PC-9 (cell line): ENCODE measurements at regions of chr12 and their contacts with region 1.

Region 1: DNA sequence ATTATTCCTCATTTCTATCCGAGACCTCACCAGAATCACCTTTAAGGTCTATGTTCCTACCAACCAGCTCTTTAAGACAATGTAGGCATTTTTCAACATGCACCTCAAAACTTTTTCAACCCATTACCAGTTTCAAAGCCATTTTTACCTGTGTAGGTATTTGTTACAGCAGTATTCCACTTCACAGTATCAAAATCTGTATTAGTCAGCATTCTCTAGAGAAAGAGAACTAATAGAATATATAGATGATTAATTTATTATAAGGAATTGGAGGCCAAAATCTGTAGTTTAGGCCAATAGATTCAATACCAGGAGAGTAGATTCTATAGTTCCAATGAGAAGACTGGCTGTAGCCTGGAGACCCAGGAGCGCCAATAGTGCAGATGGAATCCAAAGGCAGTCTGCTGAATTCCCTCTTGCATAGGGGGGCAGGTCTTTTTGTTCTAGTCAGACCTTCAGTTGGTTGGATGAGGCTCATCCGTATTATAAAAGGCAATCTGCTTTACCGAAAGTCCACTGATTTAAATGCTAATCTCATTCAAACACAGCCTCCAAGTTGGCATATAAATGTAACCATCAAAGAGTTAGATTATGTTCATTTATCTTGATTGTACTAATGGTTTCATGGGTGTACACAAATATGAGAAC is 151.6 kb upstream of the SYT1 start:
- DNase-seq: no peak
- H3K4me3 ChIP-seq: no peak overlapping the region
- H3K27ac ChIP-seq: no peak overlapping the region
- H3K4me1 ChIP-seq: no peaks in the 10 kb centered on the region
- H3K27me3 ChIP-seq: no peaks in the 10 kb centered on the region
- CTCF ChIP-seq: no peak

Region 2: GRCh38 chr12:78628491-78629100 is 84.4 kb before region 1 on chr12:
- CTCF ChIA-PET with region 1: interaction called, 15 read pairs
- POLR2A ChIA-PET with region 1: no interaction called
- intact Hi-C with region 1: no loop called
- DNase-seq: no peak
- H3K4me3 ChIP-seq: no peak overlapping the region
- H3K27ac ChIP-seq: no peak overlapping the region
- H3K4me1 ChIP-seq: no peaks in the 10 kb centered on the region
- H3K27me3 ChIP-seq: no peaks in the 10 kb centered on the region
- CTCF ChIP-seq: no peak

Region 3: DNA sequence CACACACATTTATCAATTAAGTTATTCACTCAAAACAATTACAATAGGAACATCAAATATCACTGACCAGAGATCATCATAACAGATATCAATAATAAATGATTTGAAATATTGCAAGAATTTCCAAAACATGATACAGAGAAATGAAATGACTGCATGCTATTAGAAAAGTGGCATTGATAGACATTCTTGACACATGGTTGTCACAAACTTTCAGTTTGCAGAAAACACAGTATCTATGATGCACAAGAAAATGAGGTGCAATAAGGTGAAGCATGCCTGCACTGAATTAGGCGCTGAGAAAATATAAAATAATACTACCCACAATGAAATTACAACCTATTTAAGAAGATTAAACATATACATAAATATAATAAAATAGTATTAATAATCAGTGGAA is 46.4 kb before region 1 on chr12:
- CTCF ChIA-PET with region 1: no interaction called
- POLR2A ChIA-PET with region 1: no interaction called
- intact Hi-C with region 1: no loop called
- DNase-seq: no peak
- H3K4me3 ChIP-seq: no peak overlapping the region
- H3K27ac ChIP-seq: no peak overlapping the region
- H3K4me1 ChIP-seq: no peaks in the 10 kb centered on the region
- H3K27me3 ChIP-seq: no peaks in the 10 kb centered on the region
- CTCF ChIP-seq: no peak